Activated CD4-positive, alpha-beta T cell treated with anti-CD3 and anti-CD28 coated beads, Interleukin-2, amount 10 ng/mL, durations not matched to agents 24 days and 14 days (primary cell): ENCODE measurements at regions of chr12 and their contacts with region 1.

Region 1: GRCh38 chr12:49358483-49359141 is 8.7 kb upstream of the SPATS2 start:
- DNase-seq: peak; percentile 88
- H3K4me3 Mint-ChIP-seq: no peak overlapping the region
- H3K27ac Mint-ChIP-seq: no peak overlapping the region
- H3K4me1 Mint-ChIP-seq: peaks cover 2% of the 10 kb centered on the region
- H3K27me3 Mint-ChIP-seq: peaks cover 28% of the 10 kb centered on the region

Region 2: DNA sequence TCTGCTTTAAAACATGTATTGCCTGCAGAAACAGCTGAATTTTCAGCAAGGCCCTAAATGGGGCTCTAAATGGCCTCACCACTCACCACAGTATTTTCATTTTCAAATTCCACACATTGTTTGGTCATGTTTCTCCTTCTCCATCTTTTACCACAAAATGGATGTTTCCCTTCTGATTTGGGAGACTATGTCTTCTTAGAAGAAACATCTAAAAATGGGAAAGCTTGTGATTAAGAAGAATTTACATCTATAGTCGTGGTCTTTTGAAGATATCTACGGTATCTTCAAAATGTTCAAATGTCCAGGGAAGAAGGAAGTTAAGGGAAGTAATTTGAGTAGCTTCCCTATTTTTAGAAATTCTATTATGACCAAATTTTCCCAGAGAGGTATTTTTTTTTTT is 114.4 kb before region 1 on chr12:
- intact Hi-C with region 1: no loop called
- DNase-seq: no peak
- H3K4me3 Mint-ChIP-seq: no peak overlapping the region
- H3K27ac Mint-ChIP-seq: no peak overlapping the region
- H3K4me1 Mint-ChIP-seq: no peaks in the 10 kb centered on the region
- H3K27me3 Mint-ChIP-seq: peaks cover 1% of the 10 kb centered on the region

Region 3: DNA sequence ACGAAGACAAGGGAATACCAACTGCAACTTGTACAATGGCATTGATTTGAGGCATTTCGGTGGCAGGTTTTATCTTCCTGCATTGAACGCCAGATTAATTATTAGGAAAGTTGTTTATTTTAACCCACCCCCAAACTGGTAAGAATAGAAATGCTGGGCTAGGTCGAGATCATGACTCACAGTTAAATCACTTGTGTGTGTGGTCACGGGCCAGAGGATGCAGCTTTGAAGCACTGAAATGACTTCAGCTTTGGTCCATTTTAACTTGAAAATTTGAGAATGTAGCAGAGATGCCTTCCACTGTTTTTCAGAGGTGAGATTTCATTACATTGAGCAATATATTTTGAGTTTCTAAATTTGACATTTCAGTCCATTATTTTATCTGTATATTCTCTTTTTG is 156.7 kb after region 1 on chr12:
- intact Hi-C with region 1: loop called (anchors 1 kb)
- DNase-seq: no peak
- H3K4me3 Mint-ChIP-seq: no peak overlapping the region
- H3K27ac Mint-ChIP-seq: no peak overlapping the region
- H3K4me1 Mint-ChIP-seq: peaks cover 10% of the 10 kb centered on the region
- H3K27me3 Mint-ChIP-seq: no peaks in the 10 kb centered on the region

Region 4: GRCh38 chr12:49580572-49581535 is 222.2 kb after region 1 on chr12:
- intact Hi-C with region 1: loop called (anchors 1 kb)
- DNase-seq: peak; percentile 89
- H3K4me3 Mint-ChIP-seq: no peak overlapping the region
- H3K27ac Mint-ChIP-seq: peak overlapping the region; percentile 56
- H3K4me1 Mint-ChIP-seq: peaks cover 19% of the 10 kb centered on the region
- H3K27me3 Mint-ChIP-seq: no peaks in the 10 kb centered on the region